ENCODE measurements at regions of chr2 and their contacts with region 1.

Region 1: GRCh38 chr2:240060977-240061591 is 7.8 kb upstream of the OR6B3 start:
- DNase-seq: no peak
- H3K4me3 ChIP-seq: no peak overlapping the region
- H3K27ac ChIP-seq: no peak overlapping the region
- H3K4me1 ChIP-seq: no peaks in the 10 kb centered on the region
- H3K27me3 ChIP-seq: peaks cover 0 to 19% (median 5%) of the 10 kb centered on the region in 3 donors
- CTCF ChIP-seq: peak; percentile 15 to 57 (median 40)
- EP300 ChIP-seq: no peak
- POLR2A ChIP-seq: no peak

Region 2: DNA sequence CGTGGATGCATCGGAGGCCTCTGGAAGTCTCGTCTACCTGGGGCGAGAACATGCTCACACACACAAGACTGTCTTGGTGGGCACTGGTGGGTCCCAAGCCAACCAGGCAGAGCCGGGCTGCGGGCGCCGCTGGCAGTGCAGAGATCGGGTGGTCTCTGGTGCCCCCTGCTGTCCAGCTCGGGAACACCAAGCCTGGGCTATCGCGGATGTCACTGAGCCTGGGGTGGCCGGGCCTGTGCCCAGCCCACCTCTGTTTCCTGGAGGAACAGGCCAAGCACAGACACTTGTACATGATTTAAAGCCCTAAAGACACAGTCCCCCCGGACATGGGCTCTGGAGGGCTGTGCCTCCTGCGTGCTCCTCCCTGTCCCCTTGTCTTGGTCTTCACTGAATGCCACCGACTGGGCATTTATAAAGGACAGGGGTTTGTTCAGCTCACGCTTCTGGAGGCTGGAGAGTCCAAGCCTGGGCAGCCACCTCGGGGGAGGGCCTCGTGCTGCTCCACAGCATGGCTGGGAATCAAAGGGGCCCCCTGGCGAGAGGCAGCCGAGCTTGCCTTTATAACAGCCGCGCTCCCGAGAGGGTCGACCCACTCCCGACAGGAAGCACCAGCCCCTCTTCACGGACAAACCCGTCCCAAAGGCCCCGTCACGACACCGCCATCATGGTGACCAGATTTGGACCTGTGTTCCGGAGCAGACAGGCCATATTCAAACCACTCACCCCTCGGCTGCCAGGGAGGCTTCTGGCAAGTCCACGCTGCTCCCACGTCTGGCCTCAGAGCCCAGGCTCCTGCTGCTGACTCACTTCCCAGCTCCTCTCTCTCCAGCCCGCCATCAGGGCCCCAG is 82.9 kb after region 1 on chr2:
- intact Hi-C with region 1: loop called (anchors 1 kb)
- DNase-seq: peak; percentile 82
- H3K4me3 ChIP-seq: no peak overlapping the region
- H3K27ac ChIP-seq: no peak overlapping the region
- H3K4me1 ChIP-seq: peaks cover 0 to 7% (median 0%) of the 10 kb centered on the region in 4 donors
- H3K27me3 ChIP-seq: peaks cover 0 to 28% (median 9%) of the 10 kb centered on the region in 3 donors
- CTCF ChIP-seq: peak; percentile 89 to 97 (median 92)
- EP300 ChIP-seq: no peak
- POLR2A ChIP-seq: no peak